Right ventricle myocardium inferior (tissue), 1 donor: ENCODE measurements at regions of chr10 and their contacts with region 1.

Region 1: GRCh38 chr10:70508912-70509756 is 30.6 kb downstream of the PALD1 start:
- DNase-seq: peak; percentile 82
- ATAC-seq: peak; percentile 69

Region 2: GRCh38 chr10:70477661-70478162 is 31.4 kb before region 1 on chr10:
- intact Hi-C with region 1: loop called (anchors 2 kb)
- DNase-seq: peak; percentile 49
- ATAC-seq: no peak